ENCODE measurements at regions of chr5 and their contacts with region 1.

Region 1: GRCh38 chr5:111530298-111530740 is 18.0 kb upstream of the STARD4 start:
- DNase-seq: peak; percentile 90
- H3K4me3 ChIP-seq: no peak overlapping the region
- H3K27ac ChIP-seq: peak overlapping the region; percentile 84
- H3K4me1 ChIP-seq: peaks cover 10% of the 10 kb centered on the region
- H3K27me3 ChIP-seq: no peaks in the 10 kb centered on the region
- CTCF ChIP-seq: no peak
- POLR2A ChIP-seq: no peak

Region 2: DNA sequence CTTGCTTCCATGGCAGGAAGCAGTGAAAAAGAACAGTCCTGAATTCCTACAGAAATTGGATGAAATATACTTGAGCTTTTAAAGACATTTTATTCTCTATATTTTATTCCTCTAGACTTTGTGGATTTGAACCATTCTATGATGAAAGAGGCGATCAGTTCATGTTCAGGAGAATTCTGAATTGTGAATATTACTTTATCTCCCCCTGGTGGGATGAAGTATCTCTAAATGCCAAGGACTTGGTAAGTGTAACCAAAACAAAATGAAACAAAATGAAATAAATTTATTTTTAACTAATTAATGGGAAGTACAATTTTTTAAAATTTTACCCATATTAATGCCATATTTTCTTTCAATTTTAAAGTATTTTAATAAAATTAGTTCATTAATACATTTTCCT is 52.1 kb before region 1 on chr5:
- CTCF ChIA-PET with region 1: interaction called, 10 read pairs
- POLR2A ChIA-PET with region 1: no interaction called
- dilution Hi-C with region 1: no loop called
- intact Hi-C with region 1: no loop called
- DNase-seq: no peak
- H3K4me3 ChIP-seq: no peak overlapping the region
- H3K27ac ChIP-seq: no peak overlapping the region
- H3K4me1 ChIP-seq: no peaks in the 10 kb centered on the region
- H3K27me3 ChIP-seq: no peaks in the 10 kb centered on the region
- CTCF ChIP-seq: no peak
- POLR2A ChIP-seq: no peak

Region 3: GRCh38 chr5:111512375-111513130 is 17.8 kb before region 1 on chr5 and contains the start of gene STARD4:
- CTCF ChIA-PET with region 1: interaction called, 64 read pairs
- POLR2A ChIA-PET with region 1: interaction called, 4 read pairs
- dilution Hi-C with region 1: no loop called
- intact Hi-C with region 1: loop called (anchors 1 kb)
- DNase-seq: peak; percentile 97
- H3K4me3 ChIP-seq: peak within 1 kb of the TSS; percentile 72 to 97 (median 81)
- H3K27ac ChIP-seq: peak within 1 kb of the TSS; percentile 95
- H3K4me1 ChIP-seq: peaks cover 30% of the 10 kb centered on the region
- H3K27me3 ChIP-seq: no peaks in the 10 kb centered on the region
- CTCF ChIP-seq: no peak
- POLR2A ChIP-seq: peak; percentile 61
- total RNA-seq, gene STARD4: 77.1 and 87.8 TPM in 2 replicates

Region 4: DNA sequence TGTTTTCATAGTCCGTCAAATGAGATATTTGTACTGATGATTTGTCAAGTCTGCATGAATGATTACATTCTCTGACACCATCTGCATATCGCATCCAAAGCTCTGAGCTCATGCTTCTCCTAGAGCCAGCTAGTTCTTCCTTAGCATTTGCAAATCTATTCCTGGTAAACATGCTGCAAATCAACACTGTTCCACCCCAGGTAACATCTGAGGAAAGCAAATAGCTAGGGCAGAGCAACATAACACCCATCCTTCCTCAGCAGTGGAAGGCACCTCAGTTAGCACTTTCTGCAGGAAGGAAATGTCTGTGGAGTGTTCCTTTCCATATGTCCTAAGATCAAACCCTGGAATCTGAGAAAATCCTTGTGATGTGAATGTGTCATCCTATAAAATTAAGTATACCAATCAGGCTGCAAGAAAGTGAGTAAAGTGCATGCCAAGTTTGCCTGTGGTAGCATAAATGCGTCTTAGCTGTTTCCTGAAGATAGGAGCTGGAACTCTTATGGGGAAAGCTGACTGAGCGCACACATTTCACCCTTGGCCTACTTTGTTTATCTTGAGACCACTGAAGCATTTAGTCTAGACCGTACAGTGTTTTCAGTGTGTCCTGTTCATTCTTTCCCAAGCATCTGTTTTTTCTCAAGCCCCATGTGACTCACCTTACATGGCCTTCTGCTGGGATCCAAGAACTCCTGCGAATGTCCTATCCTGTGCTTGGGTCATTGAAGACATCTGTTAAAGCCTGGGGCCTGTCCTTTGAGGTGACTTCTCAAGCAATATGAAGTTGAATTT is 32.9 kb after region 1 on chr5:
- CTCF ChIA-PET with region 1: interaction called, 28 read pairs
- POLR2A ChIA-PET with region 1: no interaction called
- dilution Hi-C with region 1: no loop called
- intact Hi-C with region 1: loop called (anchors 1 kb)
- DNase-seq: peak; percentile 100
- H3K4me3 ChIP-seq: peak overlapping the region in 1 of 3 experiments; percentile 0
- H3K27ac ChIP-seq: peak overlapping the region; percentile 99
- H3K4me1 ChIP-seq: peaks cover 50% of the 10 kb centered on the region
- H3K27me3 ChIP-seq: no peaks in the 10 kb centered on the region
- CTCF ChIP-seq: no peak
- POLR2A ChIP-seq: peak; percentile 89

Region 5: GRCh38 chr5:111626473-111627148 is 96.3 kb after region 1 on chr5:
- CTCF ChIA-PET with region 1: no interaction called
- POLR2A ChIA-PET with region 1: no interaction called
- dilution Hi-C with region 1: no loop called
- intact Hi-C with region 1: no loop called
- DNase-seq: no peak
- H3K4me3 ChIP-seq: no peak overlapping the region
- H3K27ac ChIP-seq: no peak overlapping the region
- H3K4me1 ChIP-seq: peaks cover 8% of the 10 kb centered on the region
- H3K27me3 ChIP-seq: no peaks in the 10 kb centered on the region
- CTCF ChIP-seq: no peak
- POLR2A ChIP-seq: no peak

Region 6: DNA sequence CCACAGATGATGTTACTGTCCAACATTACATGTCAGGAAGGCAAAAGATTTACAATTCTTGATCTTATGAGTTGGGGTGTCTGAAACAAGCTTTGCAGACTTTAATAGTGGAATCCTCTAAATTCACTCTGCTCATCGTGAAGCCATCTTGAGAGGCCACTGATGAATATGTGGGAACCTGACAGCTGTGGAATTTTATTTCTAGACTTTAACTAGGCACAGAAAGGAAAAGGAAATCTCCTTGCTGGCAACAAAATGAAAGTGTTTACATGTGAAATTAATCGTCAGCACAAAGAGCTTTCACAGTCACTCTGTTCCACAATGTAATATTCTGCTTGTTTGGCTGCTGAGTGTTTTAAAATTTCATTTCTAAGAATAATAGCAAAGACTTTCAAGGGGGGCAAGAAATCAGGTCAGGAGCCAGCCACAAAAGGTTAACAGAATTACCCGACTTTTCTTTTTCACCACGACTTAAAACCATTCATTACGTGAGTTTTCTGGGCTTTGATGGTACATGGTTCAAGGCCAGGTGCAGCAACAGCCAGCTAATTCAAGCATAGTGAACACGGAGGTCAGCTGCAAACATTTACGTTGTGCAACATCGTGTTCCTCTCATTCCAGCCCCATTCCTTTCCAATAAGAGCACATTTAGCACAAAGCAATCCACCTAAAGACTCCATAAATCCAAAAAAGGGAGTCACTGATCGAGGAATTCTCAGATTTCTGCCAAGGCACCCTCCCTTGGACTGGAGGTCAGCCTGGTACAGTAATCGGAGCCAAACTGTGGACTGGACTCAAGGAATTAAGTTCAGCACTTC is 212.1 kb after region 1 on chr5:
- CTCF ChIA-PET with region 1: interaction called, 14 read pairs
- POLR2A ChIA-PET with region 1: no interaction called
- dilution Hi-C with region 1: no loop called
- intact Hi-C with region 1: no loop called
- DNase-seq: peak; percentile 63
- H3K4me3 ChIP-seq: peak overlapping the region in 1 of 3 experiments; percentile 23
- H3K27ac ChIP-seq: no peak overlapping the region
- H3K4me1 ChIP-seq: peaks cover 18% of the 10 kb centered on the region
- H3K27me3 ChIP-seq: no peaks in the 10 kb centered on the region
- CTCF ChIP-seq: no peak
- POLR2A ChIP-seq: no peak

Region 7: GRCh38 chr5:111757355-111758283 is 227.3 kb after region 1 on chr5:
- CTCF ChIA-PET with region 1: interaction called, 13 read pairs
- POLR2A ChIA-PET with region 1: no interaction called
- dilution Hi-C with region 1: no loop called
- intact Hi-C with region 1: loop called (anchors 1 kb)
- DNase-seq: peak; percentile 91
- H3K4me3 ChIP-seq: peak overlapping the region; percentile 53 to 100 (median 80)
- H3K27ac ChIP-seq: peak overlapping the region; percentile 97
- H3K4me1 ChIP-seq: peaks cover 29% of the 10 kb centered on the region
- H3K27me3 ChIP-seq: no peaks in the 10 kb centered on the region
- CTCF ChIP-seq: peak; percentile 24 to 54
- POLR2A ChIP-seq: no peak

Region 8: GRCh38 chr5:112160652-112161391 is 630.5 kb after region 1 on chr5:
- CTCF ChIA-PET with region 1: interaction called, 6 read pairs
- POLR2A ChIA-PET with region 1: interaction called, 3 read pairs
- dilution Hi-C with region 1: no loop called
- intact Hi-C with region 1: loop called (anchors 5 kb)
- DNase-seq: peak; percentile 92
- H3K4me3 ChIP-seq: peak overlapping the region; percentile 90 to 100 (median 92)
- H3K27ac ChIP-seq: peak overlapping the region; percentile 72
- H3K4me1 ChIP-seq: peaks cover 17% of the 10 kb centered on the region
- H3K27me3 ChIP-seq: peaks cover 0 to 4% of the 10 kb centered on the region in 2 experiments
- CTCF ChIP-seq: peak; percentile 99
- POLR2A ChIP-seq: peak; percentile 98